Common myeloid progenitor, CD34-positive (primary cell): ENCODE measurements at regions of chr22 and their contacts with region 1.

Region 1: GRCh38 chr22:29553351-29554224 is at the start of gene THOC5:
- DNase-seq: peak; percentile 92 to 95 (median 94)
- H3K4me3 ChIP-seq: peak within 1 kb of the TSS; percentile 70 to 96 (median 83)
- H3K27ac ChIP-seq: peak within 1 kb of the TSS; percentile 74 to 87
- H3K4me1 ChIP-seq: peaks cover 3 to 12% (median 6%) of the 10 kb centered on the region in 4 experiments
- H3K27me3 ChIP-seq: no peaks in the 10 kb centered on the region

Region 2: GRCh38 chr22:29567338-29567737 is 13.8 kb after region 1 on chr22:
- CTCF ChIA-PET with region 1: interaction called, 14 read pairs
- POLR2A ChIA-PET with region 1: no interaction called
- DNase-seq: no peak
- H3K4me3 ChIP-seq: no peak overlapping the region
- H3K27ac ChIP-seq: no peak overlapping the region
- H3K4me1 ChIP-seq: no peaks in the 10 kb centered on the region
- H3K27me3 ChIP-seq: no peaks in the 10 kb centered on the region